CD8-positive, alpha-beta T cell (primary cell): ENCODE measurements at regions of chr13 and their contacts with region 1.

Region 1: DNA sequence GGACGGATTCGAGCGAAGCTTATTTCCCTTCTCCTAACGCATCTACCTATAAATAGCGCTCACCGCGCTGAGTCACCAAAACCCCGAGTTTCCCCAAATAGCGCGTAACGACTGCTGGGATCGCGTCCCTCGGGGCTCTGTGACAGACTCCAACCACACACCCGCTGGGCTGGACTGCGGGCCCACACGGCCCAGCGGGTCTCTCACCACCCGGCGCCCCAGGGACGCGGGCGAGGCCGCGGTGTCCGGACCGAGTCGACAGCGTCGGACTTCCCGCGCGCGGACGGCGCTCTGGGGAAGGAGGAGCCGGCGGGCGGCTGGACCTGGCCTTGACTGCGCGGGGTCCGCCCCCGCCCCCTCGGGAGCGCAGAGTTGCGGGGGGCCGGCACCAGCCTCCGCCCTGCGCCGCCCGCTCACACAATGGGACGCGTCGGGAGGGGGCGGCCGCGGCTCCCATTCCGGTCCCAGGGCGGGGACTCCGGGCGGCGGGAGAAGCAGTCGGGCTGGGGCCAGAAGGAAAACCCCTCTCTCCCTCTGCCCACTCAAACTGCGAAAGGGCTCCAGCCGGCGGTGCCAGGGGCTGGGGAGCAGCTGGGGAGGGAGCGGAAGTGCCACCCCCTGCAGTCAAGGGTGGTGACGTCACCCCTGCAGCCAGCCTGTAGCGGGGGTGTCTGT is 108.8 kb downstream of the KCNRG start:
- DNase-seq: peak in 8 of 9 experiments; percentile 43 to 91 (median 72)
- ATAC-seq: peak; percentile 65
- H3K4me3 ChIP-seq: peak overlapping the region; percentile 87 to 93
- H3K4me3 Mint-ChIP-seq: peak overlapping the region; percentile 90
- H3K27ac ChIP-seq: peak overlapping the region; percentile 90 to 92
- H3K27ac Mint-ChIP-seq: peak overlapping the region; percentile 96
- H3K4me1 ChIP-seq: peaks cover 24% of the 10 kb centered on the region
- H3K4me1 Mint-ChIP-seq: peaks cover 44% of the 10 kb centered on the region
- H3K27me3 ChIP-seq: peaks cover 12 to 19% of the 10 kb centered on the region in 2 experiments
- H3K27me3 Mint-ChIP-seq: peaks cover 15% of the 10 kb centered on the region
- CTCF ChIP-seq: no peak

Region 2: GRCh38 chr13:49052776-49053175 is 1071.2 kb before region 1 on chr13:
- CTCF ChIA-PET with region 1: no interaction called
- POLR2A ChIA-PET with region 1: no interaction called
- intact Hi-C with region 1: no loop called
- DNase-seq: peak in 1 of 9 experiments; percentile 5
- ATAC-seq: no peak
- H3K4me3 ChIP-seq: no peak overlapping the region
- H3K4me3 Mint-ChIP-seq: no peak overlapping the region
- H3K27ac ChIP-seq: no peak overlapping the region
- H3K27ac Mint-ChIP-seq: no peak overlapping the region
- H3K4me1 ChIP-seq: no peaks in the 10 kb centered on the region
- H3K4me1 Mint-ChIP-seq: peaks cover 14% of the 10 kb centered on the region
- H3K27me3 ChIP-seq: no peaks in the 10 kb centered on the region
- H3K27me3 Mint-ChIP-seq: no peaks in the 10 kb centered on the region
- CTCF ChIP-seq: no peak

Region 3: DNA sequence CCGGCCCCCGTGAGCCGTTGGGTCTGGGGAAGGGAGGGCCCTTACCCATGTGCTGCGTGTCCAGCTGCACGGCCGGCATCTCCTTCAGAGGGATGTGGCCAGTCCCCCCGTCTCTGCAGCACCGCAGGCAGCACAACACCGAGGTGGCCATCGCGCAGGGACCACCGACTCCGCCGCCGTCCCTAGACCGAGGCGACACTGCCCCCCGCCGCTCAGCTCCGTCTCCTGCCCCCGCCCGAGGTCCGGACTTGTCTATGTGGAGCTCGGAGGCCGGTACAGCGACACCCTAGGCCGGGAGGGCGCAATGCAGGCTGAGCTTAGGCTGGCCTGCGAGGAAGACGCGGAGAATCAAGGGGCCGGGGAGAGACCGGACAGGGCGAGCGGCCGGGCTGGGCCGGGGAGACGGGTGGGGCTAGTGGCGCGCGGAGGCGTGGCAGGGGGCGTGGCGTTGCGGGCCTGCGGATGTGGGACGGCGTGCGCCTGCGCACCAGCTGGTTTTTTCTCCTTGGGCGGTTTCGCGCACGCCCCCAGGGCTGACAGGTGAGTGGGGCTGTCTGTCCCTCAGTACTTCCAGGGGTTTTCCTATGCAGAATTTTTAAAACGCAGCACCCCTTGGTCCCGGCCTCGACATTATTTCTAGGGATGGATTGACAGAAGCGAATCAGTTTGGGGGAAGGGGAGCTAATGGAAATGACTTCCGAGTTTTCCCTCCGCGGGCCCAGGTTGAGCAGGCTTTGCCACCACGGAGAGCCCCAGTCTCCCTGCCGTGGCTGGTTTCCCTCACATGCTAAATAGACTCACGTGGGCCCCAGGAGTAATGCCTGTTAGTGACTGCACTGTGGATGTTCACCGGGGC is 187.7 kb before region 1 on chr13 and contains the start of gene SPRYD7:
- CTCF ChIA-PET with region 1: no interaction called
- POLR2A ChIA-PET with region 1: interaction called, 5 read pairs
- intact Hi-C with region 1: loop called (anchors 5 kb)
- DNase-seq: peak; percentile 82 to 97 (median 94)
- ATAC-seq: peak; percentile 85
- H3K4me3 ChIP-seq: peak within 1 kb of the TSS; percentile 81 to 98
- H3K4me3 Mint-ChIP-seq: peak within 1 kb of the TSS; percentile 88
- H3K27ac ChIP-seq: peak within 1 kb of the TSS; percentile 37 to 44
- H3K27ac Mint-ChIP-seq: peak within 1 kb of the TSS; percentile 81
- H3K4me1 ChIP-seq: peaks cover 14% of the 10 kb centered on the region
- H3K4me1 Mint-ChIP-seq: peaks cover 19% of the 10 kb centered on the region
- H3K27me3 ChIP-seq: no peaks in the 10 kb centered on the region
- H3K27me3 Mint-ChIP-seq: no peaks in the 10 kb centered on the region
- CTCF ChIP-seq: peak; percentile 62
- total RNA-seq, gene SPRYD7: 1.2 to 1.4 TPM

Region 4: DNA sequence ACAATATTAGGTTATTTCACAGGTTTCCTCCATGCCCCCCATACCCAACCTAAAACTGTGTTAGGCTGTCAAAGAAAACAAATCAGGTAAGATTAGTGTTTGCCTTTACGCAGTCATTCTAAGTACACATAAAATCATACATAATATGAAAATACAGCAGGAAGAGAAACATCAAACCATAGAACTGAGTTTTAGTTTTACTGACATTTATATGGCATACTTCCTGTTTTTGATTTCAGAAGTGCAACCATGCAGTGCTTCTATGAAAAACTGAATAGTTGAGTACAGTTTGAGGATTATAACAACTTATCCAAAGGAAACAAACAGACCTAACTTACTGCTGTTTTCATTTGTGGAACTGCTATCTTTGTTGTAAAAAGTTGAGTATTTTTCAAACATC is 17.4 kb before region 1 on chr13:
- CTCF ChIA-PET with region 1: no interaction called
- POLR2A ChIA-PET with region 1: interaction called, 10 read pairs
- intact Hi-C with region 1: loop called in 1 of 2 experiments (anchors 1 kb)
- DNase-seq: peak in 1 of 9 experiments; percentile 28
- ATAC-seq: peak; percentile 44
- H3K4me3 ChIP-seq: no peak overlapping the region
- H3K4me3 Mint-ChIP-seq: peak overlapping the region; percentile 51
- H3K27ac ChIP-seq: peak overlapping the region in 1 of 2 experiments; percentile 48
- H3K27ac Mint-ChIP-seq: peak overlapping the region; percentile 91
- H3K4me1 ChIP-seq: peaks cover 19% of the 10 kb centered on the region
- H3K4me1 Mint-ChIP-seq: peaks cover 50% of the 10 kb centered on the region
- H3K27me3 ChIP-seq: no peaks in the 10 kb centered on the region
- H3K27me3 Mint-ChIP-seq: no peaks in the 10 kb centered on the region
- CTCF ChIP-seq: no peak

Region 5: GRCh38 chr13:50365408-50366391 is 241.7 kb after region 1 on chr13:
- CTCF ChIA-PET with region 1: no interaction called
- POLR2A ChIA-PET with region 1: interaction called, 12 read pairs
- intact Hi-C with region 1: no loop called
- DNase-seq: peak in 5 of 9 experiments; percentile 22 to 72 (median 51)
- ATAC-seq: peak; percentile 80
- H3K4me3 ChIP-seq: peak overlapping the region in 1 of 2 experiments; percentile 23
- H3K4me3 Mint-ChIP-seq: peak overlapping the region; percentile 70
- H3K27ac ChIP-seq: peak overlapping the region; percentile 21 to 80
- H3K27ac Mint-ChIP-seq: peak overlapping the region; percentile 88
- H3K4me1 ChIP-seq: peaks cover 5% of the 10 kb centered on the region
- H3K4me1 Mint-ChIP-seq: peaks cover 37% of the 10 kb centered on the region
- H3K27me3 ChIP-seq: no peaks in the 10 kb centered on the region
- H3K27me3 Mint-ChIP-seq: no peaks in the 10 kb centered on the region
- CTCF ChIP-seq: no peak

Region 6: GRCh38 chr13:50893211-50893852 is 769.3 kb after region 1 on chr13:
- CTCF ChIA-PET with region 1: interaction called, 4 read pairs
- POLR2A ChIA-PET with region 1: interaction called, 17 read pairs
- intact Hi-C with region 1: loop called in 1 of 2 experiments (anchors 5 kb)
- DNase-seq: peak in 5 of 9 experiments; percentile 16 to 80 (median 53)
- ATAC-seq: peak; percentile 95
- H3K4me3 ChIP-seq: peak overlapping the region; percentile 26 to 30
- H3K4me3 Mint-ChIP-seq: peak overlapping the region; percentile 80
- H3K27ac ChIP-seq: peak overlapping the region; percentile 46 to 86
- H3K27ac Mint-ChIP-seq: peak overlapping the region; percentile 91
- H3K4me1 ChIP-seq: peaks cover 27% of the 10 kb centered on the region
- H3K4me1 Mint-ChIP-seq: peaks cover 42% of the 10 kb centered on the region
- H3K27me3 ChIP-seq: no peaks in the 10 kb centered on the region
- H3K27me3 Mint-ChIP-seq: no peaks in the 10 kb centered on the region
- CTCF ChIP-seq: no peak